IMR-90 (cell line): ENCODE measurements at regions of chr17 and their contacts with region 1.

Region 1: GRCh38 chr17:69223809-69224208 is 4.8 kb downstream of the ABCA10 start:
- DNase-seq: peak; percentile 48
- ATAC-seq: peak; percentile 83
- H3K4me3 ChIP-seq: no peak overlapping the region
- H3K27ac ChIP-seq: no peak overlapping the region
- H3K4me1 ChIP-seq: no peaks in the 10 kb centered on the region
- H3K27me3 ChIP-seq: no peaks in the 10 kb centered on the region
- CTCF ChIP-seq: no peak
- POLR2A ChIP-seq: no peak
- RAD21 ChIP-seq: no peak

Region 2: DNA sequence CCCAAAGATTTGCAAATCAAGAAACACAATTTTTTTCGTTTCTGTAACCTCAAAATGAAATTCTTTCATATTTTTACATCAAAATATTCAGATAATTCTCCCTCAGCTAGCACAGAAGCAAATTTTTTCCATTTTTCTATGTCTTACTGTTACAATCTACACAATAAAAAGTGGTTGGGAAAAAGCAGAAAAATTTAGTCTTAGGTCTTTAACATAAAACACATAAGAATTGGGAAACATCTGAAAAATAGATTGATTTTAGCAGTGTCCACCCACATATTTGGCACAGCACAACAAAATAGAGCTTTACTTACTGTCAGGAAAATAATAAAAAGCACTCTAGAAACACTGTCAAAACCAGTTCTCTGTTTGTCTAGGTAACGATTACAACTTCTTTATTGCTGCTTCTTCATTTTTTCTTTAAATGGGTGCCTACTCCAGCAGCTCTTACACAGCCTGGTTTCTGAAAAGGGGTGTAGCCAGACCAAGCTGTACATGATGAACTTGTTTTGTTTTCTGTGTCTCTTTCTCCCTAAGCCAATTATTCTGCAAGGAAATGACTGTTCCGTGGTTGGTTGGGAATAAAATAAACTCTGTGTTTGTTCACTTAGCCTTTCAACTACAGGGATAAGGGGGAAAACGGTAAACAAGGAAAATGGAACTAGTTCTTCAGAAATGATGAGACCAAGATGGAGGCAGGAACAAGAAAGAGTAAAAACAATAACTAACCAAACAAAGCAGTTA is 82.2 kb before region 1 on chr17 and contains the start of gene ABCA6:
- CTCF ChIA-PET with region 1: no interaction called
- POLR2A ChIA-PET with region 1: no interaction called
- dilution Hi-C with region 1: no loop called
- in situ Hi-C with region 1: no loop called
- intact Hi-C with region 1: no loop called
- DNase-seq: no peak
- ATAC-seq: peak; percentile 80
- H3K4me3 ChIP-seq: no peak within 1 kb of the TSS
- H3K27ac ChIP-seq: peak within 1 kb of the TSS; percentile 96; the same call in 1 of the 2 replicates
- H3K4me1 ChIP-seq: peaks cover 5% of the 10 kb centered on the region; the same call in 1 of the 2 replicates
- H3K27me3 ChIP-seq: no peaks in the 10 kb centered on the region
- CTCF ChIP-seq: no peak
- POLR2A ChIP-seq: no peak
- RAD21 ChIP-seq: no peak
- total RNA-seq, gene ABCA6: under 0.01 TPM in 2 replicates

Region 3: DNA sequence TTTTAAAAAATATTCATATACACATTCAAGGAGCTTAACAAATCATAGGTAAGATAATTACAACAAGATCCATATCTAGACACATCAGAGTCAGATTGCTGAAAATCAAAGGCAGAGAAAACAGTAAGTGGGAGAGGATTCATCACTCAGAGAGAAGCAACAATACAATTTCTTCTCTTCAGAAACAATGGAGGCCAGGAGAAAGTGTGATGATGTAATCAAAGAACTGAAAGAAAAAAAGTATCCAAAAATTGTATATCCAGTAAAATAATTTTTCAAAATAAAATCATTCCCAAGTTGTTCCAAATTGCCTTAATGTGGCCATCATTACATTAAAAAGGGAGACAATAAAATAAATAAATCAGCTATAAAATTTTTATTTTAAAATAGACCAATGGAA is 64.4 kb before region 1 on chr17:
- CTCF ChIA-PET with region 1: no interaction called
- POLR2A ChIA-PET with region 1: no interaction called
- dilution Hi-C with region 1: no loop called
- in situ Hi-C with region 1: no loop called
- intact Hi-C with region 1: loop called (anchors 5 kb)
- DNase-seq: no peak
- ATAC-seq: no peak
- H3K4me3 ChIP-seq: no peak overlapping the region
- H3K27ac ChIP-seq: no peak overlapping the region
- H3K4me1 ChIP-seq: no peaks in the 10 kb centered on the region
- H3K27me3 ChIP-seq: no peaks in the 10 kb centered on the region
- CTCF ChIP-seq: no peak
- POLR2A ChIP-seq: no peak
- RAD21 ChIP-seq: no peak

Region 4: DNA sequence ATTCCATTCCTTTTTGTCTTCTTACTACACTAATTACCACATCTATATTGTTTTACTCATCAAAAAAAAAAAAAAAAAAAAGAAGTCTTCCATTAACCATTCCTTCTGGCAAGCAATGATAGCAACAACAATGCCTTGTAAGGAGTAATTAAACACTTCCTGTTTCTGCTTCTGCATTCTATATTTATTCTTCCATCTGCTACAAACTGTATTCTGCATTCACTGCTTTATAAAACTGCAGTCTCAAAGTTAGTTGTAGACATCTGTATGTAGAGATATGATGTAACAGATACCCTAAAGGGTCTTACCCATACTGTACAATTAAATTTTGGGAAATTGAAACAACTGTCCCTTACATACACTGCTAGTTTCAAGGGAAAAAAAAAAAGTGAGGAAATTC is 53.4 kb before region 1 on chr17:
- CTCF ChIA-PET with region 1: no interaction called
- POLR2A ChIA-PET with region 1: no interaction called
- dilution Hi-C with region 1: no loop called
- in situ Hi-C with region 1: no loop called
- intact Hi-C with region 1: loop called (anchors 5 kb)
- DNase-seq: no peak
- ATAC-seq: no peak
- H3K4me3 ChIP-seq: no peak overlapping the region
- H3K27ac ChIP-seq: no peak overlapping the region
- H3K4me1 ChIP-seq: no peaks in the 10 kb centered on the region
- H3K27me3 ChIP-seq: no peaks in the 10 kb centered on the region
- CTCF ChIP-seq: no peak
- POLR2A ChIP-seq: no peak
- RAD21 ChIP-seq: no peak

Region 5: GRCh38 chr17:69300222-69300621 is 76.4 kb after region 1 on chr17:
- CTCF ChIA-PET with region 1: no interaction called
- POLR2A ChIA-PET with region 1: no interaction called
- dilution Hi-C with region 1: no loop called
- in situ Hi-C with region 1: no loop called
- intact Hi-C with region 1: no loop called
- DNase-seq: no peak
- ATAC-seq: no peak
- H3K4me3 ChIP-seq: no peak overlapping the region
- H3K27ac ChIP-seq: no peak overlapping the region
- H3K4me1 ChIP-seq: no peaks in the 10 kb centered on the region
- H3K27me3 ChIP-seq: no peaks in the 10 kb centered on the region
- CTCF ChIP-seq: no peak
- POLR2A ChIP-seq: no peak
- RAD21 ChIP-seq: no peak